AG04449 (cell line): ENCODE measurements at regions of chr4 and their contacts with region 1.

Region 1: GRCh38 chr4:7042697-7043464 is at the start of gene TADA2B:
- DNase-seq: peak; percentile 74
- H3K4me3 ChIP-seq: peak within 1 kb of the TSS; percentile 80
- CTCF ChIP-seq: peak; percentile 12

Region 2: GRCh38 chr4:7021930-7022658 is 20.8 kb before region 1 on chr4:
- CTCF ChIA-PET with region 1: interaction called, 20 read pairs
- POLR2A ChIA-PET with region 1: no interaction called
- DNase-seq: peak; percentile 58
- H3K4me3 ChIP-seq: no peak overlapping the region
- CTCF ChIP-seq: no peak

Region 3: GRCh38 chr4:7052923-7053715 is 10.2 kb after region 1 on chr4:
- CTCF ChIA-PET with region 1: interaction called, 83 read pairs
- POLR2A ChIA-PET with region 1: interaction called, 5 read pairs
- DNase-seq: no peak
- H3K4me3 ChIP-seq: no peak overlapping the region
- CTCF ChIP-seq: no peak

Region 4: GRCh38 chr4:7781366-7781765 is 738.5 kb after region 1 on chr4:
- CTCF ChIA-PET with region 1: no interaction called
- POLR2A ChIA-PET with region 1: no interaction called
- DNase-seq: no peak
- H3K4me3 ChIP-seq: no peak overlapping the region
- CTCF ChIP-seq: no peak